A549 (cell line): ENCODE measurements at regions of chr19 and their contacts with region 1.

Region 1: GRCh38 chr19:43425567-43426392 is 11.1 kb downstream of the TEX101 start:
- DNase-seq: peak in 1 of 2 experiments; percentile 35
- ATAC-seq: peak; percentile 89 to 92; a peak in 5 of 6 replicates
- H3K4me3 ChIP-seq: no peak overlapping the region
- H3K27ac ChIP-seq: no peak overlapping the region
- H3K4me1 ChIP-seq: no peaks in the 10 kb centered on the region
- CTCF ChIP-seq: peak; percentile 79
- EP300 ChIP-seq: no peak
- POLR2A ChIP-seq: no peak
- RAD21 ChIP-seq: peak; percentile 69 to 70

Region 2: GRCh38 chr19:43362179-43362578 is 63.6 kb before region 1 on chr19:
- CTCF ChIA-PET with region 1: no interaction called
- POLR2A ChIA-PET with region 1: no interaction called
- DNase-seq: no peak
- ATAC-seq: no peak
- H3K4me3 ChIP-seq: no peak overlapping the region
- H3K27ac ChIP-seq: no peak overlapping the region
- H3K4me1 ChIP-seq: no peaks in the 10 kb centered on the region
- CTCF ChIP-seq: no peak
- EP300 ChIP-seq: no peak
- POLR2A ChIP-seq: no peak
- RAD21 ChIP-seq: no peak

Region 3: GRCh38 chr19:43409415-43409814 is 16.4 kb before region 1 on chr19:
- CTCF ChIA-PET with region 1: interaction called, 15 read pairs
- POLR2A ChIA-PET with region 1: no interaction called
- DNase-seq: no peak
- ATAC-seq: no peak
- H3K4me3 ChIP-seq: no peak overlapping the region
- H3K27ac ChIP-seq: no peak overlapping the region
- H3K4me1 ChIP-seq: no peaks in the 10 kb centered on the region
- CTCF ChIP-seq: no peak
- EP300 ChIP-seq: no peak
- POLR2A ChIP-seq: no peak
- RAD21 ChIP-seq: no peak

Region 4: DNA sequence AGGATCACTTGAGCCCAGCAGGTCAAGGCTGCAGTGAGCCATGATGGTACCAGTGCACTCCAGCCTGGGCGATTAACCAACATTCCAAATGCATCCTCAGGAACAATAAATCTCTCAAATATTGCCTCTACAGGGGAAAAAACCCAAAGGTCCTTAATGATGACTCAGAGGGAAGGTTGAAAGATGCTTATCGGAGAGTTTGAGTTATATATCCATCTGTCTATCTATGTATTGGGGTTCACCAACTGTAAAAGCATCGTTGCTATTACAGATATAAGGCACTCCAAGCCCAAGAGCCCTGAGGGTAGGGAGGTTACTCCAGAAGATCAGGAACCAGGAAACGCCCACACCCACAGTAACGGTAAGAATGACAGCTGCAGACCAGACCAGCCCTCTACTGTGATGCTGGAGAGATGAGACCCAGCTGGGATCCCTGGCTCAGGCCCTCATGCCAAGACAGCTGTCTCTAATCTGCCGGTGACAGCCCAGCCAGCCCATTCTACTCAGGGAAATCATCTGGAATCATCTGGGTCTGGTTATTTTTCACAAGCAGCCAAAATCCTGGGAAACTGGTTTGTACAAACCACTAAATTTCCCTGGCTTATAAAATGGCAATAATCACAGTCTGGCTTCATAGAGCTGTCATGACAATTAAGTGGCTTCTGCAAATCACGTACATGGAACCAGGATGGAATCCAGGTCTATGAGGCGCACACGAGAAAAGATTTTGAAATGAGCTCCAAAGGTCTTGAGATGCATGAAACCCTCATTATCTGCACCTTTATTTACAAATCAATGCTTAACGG is 12.7 kb after region 1 on chr19:
- CTCF ChIA-PET with region 1: interaction called, 71 read pairs
- POLR2A ChIA-PET with region 1: no interaction called
- DNase-seq: peak; percentile 36 to 59
- ATAC-seq: peak; percentile 73 to 78
- H3K4me3 ChIP-seq: peak overlapping the region; percentile 12; the same call in 1 of the 3 replicates
- H3K27ac ChIP-seq: peak overlapping the region; percentile 42 to 57; a peak in 5 of 6 replicates
- H3K4me1 ChIP-seq: peaks cover 21% of the 10 kb centered on the region
- CTCF ChIP-seq: no peak
- EP300 ChIP-seq: no peak
- POLR2A ChIP-seq: no peak
- RAD21 ChIP-seq: no peak